MCF 10A (cell line): ENCODE measurements at regions of chr5 and their contacts with region 1.

Region 1: DNA sequence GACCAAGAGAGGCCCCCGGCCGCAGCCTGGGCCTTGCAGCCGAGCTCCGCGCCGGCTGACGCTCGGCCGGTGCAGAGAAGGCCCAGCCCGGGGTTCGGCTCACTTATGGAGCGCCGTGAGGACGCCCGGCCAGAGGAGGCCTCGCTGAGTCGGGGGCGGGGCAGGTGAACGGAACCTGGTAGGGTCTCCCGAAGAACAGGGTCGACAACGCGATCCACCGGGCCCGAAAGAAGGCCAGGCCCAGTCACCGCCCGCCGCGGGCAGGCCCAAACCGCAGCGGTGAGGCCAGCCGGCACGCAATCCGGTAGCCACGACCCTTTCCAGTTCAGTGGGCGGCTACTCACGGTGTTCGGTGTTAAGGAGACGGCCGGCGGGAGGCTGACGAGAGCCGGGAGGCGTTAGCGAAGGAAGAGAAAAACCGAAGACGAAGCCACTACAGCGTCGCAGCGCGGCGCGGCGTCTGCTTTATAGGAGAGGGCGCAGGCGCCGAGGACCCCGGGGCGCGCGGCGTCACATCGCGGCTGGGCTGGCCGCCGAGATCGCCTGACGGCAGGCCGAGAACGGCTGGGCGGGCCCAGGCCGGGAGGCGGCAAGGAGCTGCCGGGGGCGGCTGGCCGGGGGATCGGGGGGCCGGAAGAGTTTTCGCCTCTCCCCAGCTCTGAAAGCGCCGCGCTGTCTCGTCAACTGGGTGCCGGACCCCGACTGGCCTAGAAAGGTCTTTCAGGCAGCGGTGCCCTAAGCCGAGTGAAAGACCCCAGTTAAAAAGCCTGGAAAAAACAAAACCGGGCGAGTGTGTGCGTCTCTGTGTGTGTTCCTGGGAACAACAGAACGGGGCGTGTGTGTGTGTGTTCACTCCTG is at the start of gene SKP1:
- DNase-seq: peak; percentile 89
- H3K4me3 Mint-ChIP-seq: peak within 1 kb of the TSS; percentile 97
- H3K27ac Mint-ChIP-seq: peak within 1 kb of the TSS; percentile 97
- H3K4me1 Mint-ChIP-seq: peaks cover 28% of the 10 kb centered on the region
- H3K27me3 Mint-ChIP-seq: no peaks in the 10 kb centered on the region
- CTCF ChIP-seq: no peak
- total RNA-seq, gene SKP1: 415 and 488 TPM in 2 replicates

Region 2: GRCh38 chr5:134053840-134054338 is 122.9 kb before region 1 on chr5:
- CTCF ChIA-PET with region 1: interaction called, 3 read pairs
- POLR2A ChIA-PET with region 1: interaction called, 10 read pairs
- intact Hi-C with region 1: no loop called
- DNase-seq: peak; percentile 53
- H3K4me3 Mint-ChIP-seq: no peak overlapping the region
- H3K27ac Mint-ChIP-seq: peak overlapping the region; percentile 46
- H3K4me1 Mint-ChIP-seq: peaks cover 38% of the 10 kb centered on the region
- H3K27me3 Mint-ChIP-seq: no peaks in the 10 kb centered on the region
- CTCF ChIP-seq: no peak

Region 3: DNA sequence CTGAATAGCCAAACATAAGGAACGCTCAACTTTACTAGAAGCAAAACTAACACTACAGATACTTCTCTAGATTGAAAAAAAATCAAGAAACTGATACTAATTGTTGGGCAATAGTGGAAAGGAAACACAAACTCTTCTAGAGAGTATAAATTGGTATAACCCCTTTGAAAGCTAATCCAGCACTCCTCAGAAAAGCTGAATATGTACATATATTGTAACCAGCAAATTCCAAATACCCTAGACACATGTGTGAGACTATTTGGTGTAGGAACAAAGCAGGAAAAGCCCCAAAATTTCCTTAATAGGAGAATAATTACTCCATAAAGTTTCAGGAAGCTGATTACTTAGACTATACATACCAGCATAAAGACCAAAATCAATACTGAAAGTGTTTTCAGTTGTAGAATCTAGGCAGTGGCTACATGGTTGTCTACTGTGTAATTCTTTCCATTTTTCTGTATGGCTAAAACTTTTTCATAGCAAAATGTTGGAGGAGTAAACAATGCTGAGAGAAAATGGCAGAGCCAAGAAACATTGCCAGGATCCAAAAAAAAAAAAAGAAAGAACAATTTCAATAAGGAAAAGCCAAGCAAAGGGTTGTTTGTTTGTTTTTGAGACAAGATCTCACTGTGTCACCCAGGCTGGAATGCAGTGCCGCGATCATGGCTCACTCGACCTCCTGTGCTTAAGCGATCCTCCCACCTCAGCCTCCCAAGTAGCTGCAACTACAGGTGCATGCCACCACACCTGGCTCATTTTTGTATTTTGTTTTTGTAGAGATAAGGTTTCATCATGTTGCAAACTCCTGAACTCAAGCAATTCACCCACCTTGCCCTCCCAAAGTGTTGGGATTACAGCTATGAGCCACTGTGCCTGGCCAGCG is 15.0 kb before region 1 on chr5:
- CTCF ChIA-PET with region 1: no interaction called
- POLR2A ChIA-PET with region 1: interaction called, 65 read pairs
- intact Hi-C with region 1: no loop called
- DNase-seq: no peak
- H3K4me3 Mint-ChIP-seq: no peak overlapping the region
- H3K27ac Mint-ChIP-seq: no peak overlapping the region
- H3K4me1 Mint-ChIP-seq: peaks cover 11% of the 10 kb centered on the region
- H3K27me3 Mint-ChIP-seq: no peaks in the 10 kb centered on the region
- CTCF ChIP-seq: no peak

Region 4: DNA sequence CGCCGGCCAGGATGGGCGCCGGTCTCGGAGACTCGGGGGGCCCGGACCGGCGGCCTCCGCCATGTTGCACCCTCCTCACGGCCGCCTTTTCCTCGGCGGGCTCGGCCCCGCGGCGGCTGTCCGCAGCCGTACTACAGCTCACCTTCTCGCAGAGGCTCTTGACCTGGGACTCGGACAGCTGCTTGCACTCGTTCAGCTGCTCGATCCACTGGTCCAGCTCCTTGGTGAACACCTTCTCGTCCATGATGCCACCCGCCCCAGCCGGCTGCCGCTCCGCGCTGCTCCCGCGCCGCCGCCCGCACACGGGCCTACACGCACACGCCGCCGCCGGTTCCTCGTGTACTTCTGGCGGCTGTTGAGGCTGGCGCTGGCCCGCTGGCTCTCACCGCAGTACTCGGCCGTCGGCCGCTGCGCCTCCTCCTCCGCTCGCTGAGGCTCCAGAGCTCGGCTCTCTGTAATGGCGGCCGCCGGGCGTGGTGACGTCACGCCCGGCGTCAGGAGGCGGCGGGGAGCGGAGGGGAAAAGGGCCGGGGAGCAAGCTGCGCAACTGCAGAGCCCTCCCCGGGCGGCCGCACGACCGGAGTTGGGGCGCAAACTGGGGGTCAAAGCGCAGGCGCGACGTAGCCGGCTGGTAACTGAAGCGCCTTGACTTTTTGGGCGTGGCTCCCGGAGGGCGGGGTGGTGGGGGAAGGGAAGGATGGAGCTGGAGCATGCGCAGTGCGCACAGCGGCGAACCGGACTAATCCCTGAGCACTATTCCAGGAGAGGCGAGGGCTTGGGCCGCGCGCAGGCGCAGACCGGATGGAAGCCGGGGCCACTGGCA is 49.1 kb after region 1 on chr5 and contains the start of gene PPP2CA:
- CTCF ChIA-PET with region 1: interaction called, 16 read pairs
- POLR2A ChIA-PET with region 1: interaction called, 309 read pairs
- intact Hi-C with region 1: loop called (anchors 2 kb)
- DNase-seq: peak; percentile 99
- H3K4me3 Mint-ChIP-seq: peak within 1 kb of the TSS; percentile 97
- H3K27ac Mint-ChIP-seq: peak within 1 kb of the TSS; percentile 100
- H3K4me1 Mint-ChIP-seq: peaks cover 34% of the 10 kb centered on the region
- H3K27me3 Mint-ChIP-seq: no peaks in the 10 kb centered on the region
- CTCF ChIP-seq: no peak
- total RNA-seq, gene PPP2CA: 317 and 359 TPM in 2 replicates

Region 5: DNA sequence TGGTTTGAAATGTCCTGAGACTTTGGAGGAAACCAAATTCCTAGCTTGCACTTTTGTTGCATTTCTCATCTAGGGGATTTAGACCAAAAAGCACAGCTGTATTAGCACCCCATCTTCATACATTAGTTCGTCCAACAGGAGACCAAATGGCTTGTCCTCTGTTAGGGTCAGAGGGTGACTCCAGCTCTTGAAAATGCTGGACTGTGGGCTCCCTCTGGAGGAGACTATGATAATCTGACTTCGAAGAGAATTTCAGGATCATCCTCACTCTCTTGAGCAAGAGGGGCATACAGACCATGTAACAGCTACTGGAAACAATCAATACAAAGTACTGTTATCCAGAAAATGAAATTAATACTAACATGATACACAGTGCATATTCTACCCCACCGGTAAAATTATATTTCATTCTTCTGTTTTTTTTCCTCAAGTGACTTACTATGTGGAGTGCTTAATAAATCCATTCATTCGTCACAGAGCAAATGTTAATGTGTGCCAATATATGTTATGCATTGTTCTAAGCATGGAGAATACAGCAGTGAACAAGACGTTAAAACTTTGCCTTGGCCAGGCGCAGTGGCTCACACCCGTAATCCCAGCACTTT is 112.9 kb after region 1 on chr5:
- CTCF ChIA-PET with region 1: interaction called, 425 read pairs
- POLR2A ChIA-PET with region 1: interaction called, 58 read pairs
- intact Hi-C with region 1: loop called (anchors 2 kb)
- DNase-seq: peak; percentile 89
- H3K4me3 Mint-ChIP-seq: no peak overlapping the region
- H3K27ac Mint-ChIP-seq: no peak overlapping the region
- H3K4me1 Mint-ChIP-seq: no peaks in the 10 kb centered on the region
- H3K27me3 Mint-ChIP-seq: peaks cover 17% of the 10 kb centered on the region
- CTCF ChIP-seq: peak; percentile 95

Region 6: DNA sequence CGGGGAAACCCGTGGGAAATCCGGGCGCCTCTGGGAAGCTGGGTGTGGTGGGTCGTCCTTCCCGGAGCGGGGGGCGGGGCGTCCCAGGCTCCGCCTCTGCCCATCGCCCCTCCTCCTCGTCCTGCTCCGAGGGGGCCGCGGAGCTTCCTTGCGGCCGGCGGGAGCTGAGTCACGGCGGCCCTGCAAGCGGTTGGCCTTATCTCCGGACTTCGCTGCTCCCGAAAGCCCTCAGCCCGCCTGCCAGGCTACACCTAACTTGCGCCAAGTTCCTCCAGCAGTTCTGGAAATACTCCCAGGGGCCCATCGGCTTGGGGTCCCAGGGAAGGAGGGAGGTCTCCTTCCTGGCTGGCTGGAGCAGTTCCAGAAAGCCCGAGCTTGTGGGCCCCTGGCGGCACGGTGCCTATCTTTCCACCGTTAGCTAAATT is 289.1 kb after region 1 on chr5:
- CTCF ChIA-PET with region 1: no interaction called
- POLR2A ChIA-PET with region 1: interaction called, 15 read pairs
- intact Hi-C with region 1: no loop called
- DNase-seq: peak; percentile 97
- H3K4me3 Mint-ChIP-seq: peak overlapping the region; percentile 72
- H3K27ac Mint-ChIP-seq: peak overlapping the region; percentile 44
- H3K4me1 Mint-ChIP-seq: peaks cover 42% of the 10 kb centered on the region
- H3K27me3 Mint-ChIP-seq: no peaks in the 10 kb centered on the region
- CTCF ChIP-seq: no peak

Region 7: GRCh38 chr5:134738133-134738962 is 561.6 kb after region 1 on chr5 and contains the start of gene CAMLG:
- CTCF ChIA-PET with region 1: no interaction called
- POLR2A ChIA-PET with region 1: interaction called, 16 read pairs
- intact Hi-C with region 1: no loop called
- DNase-seq: peak; percentile 99
- H3K4me3 Mint-ChIP-seq: peak within 1 kb of the TSS; percentile 97
- H3K27ac Mint-ChIP-seq: peak within 1 kb of the TSS; percentile 95
- H3K4me1 Mint-ChIP-seq: peaks cover 17% of the 10 kb centered on the region
- H3K27me3 Mint-ChIP-seq: no peaks in the 10 kb centered on the region
- CTCF ChIP-seq: peak; percentile 55
- total RNA-seq, gene CAMLG: 38.3 and 41.8 TPM in 2 replicates